WTC11 (cell line): ENCODE measurements at regions of chr15 and their contacts with region 1.

Region 1: GRCh38 chr15:43218908-43219706 is 1.7 kb downstream of the EPB42 start:
- DNase-seq: peak; percentile 80
- ATAC-seq: peak; percentile 96
- H3K4me3 Mint-ChIP-seq: no peak overlapping the region
- H3K27ac Mint-ChIP-seq: no peak overlapping the region
- H3K4me1 Mint-ChIP-seq: peaks cover 8% of the 10 kb centered on the region
- H3K27me3 Mint-ChIP-seq: no peaks in the 10 kb centered on the region; the same call in 1 of the 2 replicates
- CTCF ChIP-seq: peak; percentile 67

Region 2: GRCh38 chr15:43185157-43186017 is 33.7 kb before region 1 on chr15 and contains the start of gene CCNDBP1:
- CTCF ChIA-PET with region 1: interaction called, 10 read pairs
- POLR2A ChIA-PET with region 1: no interaction called
- DNase-seq: peak; percentile 99
- ATAC-seq: peak; percentile 96
- H3K4me3 Mint-ChIP-seq: peak within 1 kb of the TSS; percentile 96
- H3K27ac Mint-ChIP-seq: peak within 1 kb of the TSS; percentile 90
- H3K4me1 Mint-ChIP-seq: peaks cover 13% of the 10 kb centered on the region
- H3K27me3 Mint-ChIP-seq: no peaks in the 10 kb centered on the region
- CTCF ChIP-seq: no peak; the same call in 1 of the 2 replicates
- total RNA-seq, gene CCNDBP1: 19.1 to 22.0 TPM (median 20.4 TPM) in 3 replicates

Region 3: DNA sequence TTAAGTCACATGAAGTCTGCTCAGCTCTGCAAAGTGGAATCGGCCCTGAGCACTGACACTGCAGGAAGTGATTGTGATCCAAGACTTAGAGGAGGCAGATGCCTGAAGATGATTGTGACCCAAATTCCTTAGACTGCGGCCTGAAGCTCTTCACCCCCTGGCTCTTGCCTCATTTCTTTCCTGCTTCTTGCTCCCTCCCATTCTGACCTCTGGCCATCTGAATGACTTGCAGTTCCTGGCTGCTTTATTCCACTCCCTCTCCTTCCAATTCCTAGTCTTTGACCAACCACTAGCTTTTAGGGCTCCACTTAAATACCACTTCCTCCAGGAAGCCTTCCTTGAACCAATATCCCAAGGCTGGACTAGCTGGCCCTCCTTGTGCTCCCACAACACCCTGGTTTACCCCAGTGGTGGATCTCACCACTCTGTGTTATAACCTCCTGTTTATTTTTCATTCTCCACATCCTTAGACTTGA is 11.6 kb after region 1 on chr15:
- CTCF ChIA-PET with region 1: interaction called, 30 read pairs
- POLR2A ChIA-PET with region 1: no interaction called
- DNase-seq: no peak
- ATAC-seq: no peak
- H3K4me3 Mint-ChIP-seq: no peak overlapping the region
- H3K27ac Mint-ChIP-seq: no peak overlapping the region
- H3K4me1 Mint-ChIP-seq: no peaks in the 10 kb centered on the region
- H3K27me3 Mint-ChIP-seq: no peaks in the 10 kb centered on the region; the same call in 1 of the 2 replicates
- CTCF ChIP-seq: no peak

Region 4: GRCh38 chr15:43275740-43276562 is 56.8 kb after region 1 on chr15:
- CTCF ChIA-PET with region 1: interaction called, 11 read pairs
- POLR2A ChIA-PET with region 1: no interaction called
- DNase-seq: no peak
- ATAC-seq: no peak; the same call in 1 of the 2 replicates
- H3K4me3 Mint-ChIP-seq: no peak overlapping the region
- H3K27ac Mint-ChIP-seq: no peak overlapping the region
- H3K4me1 Mint-ChIP-seq: no peaks in the 10 kb centered on the region
- H3K27me3 Mint-ChIP-seq: no peaks in the 10 kb centered on the region
- CTCF ChIP-seq: no peak

Region 5: DNA sequence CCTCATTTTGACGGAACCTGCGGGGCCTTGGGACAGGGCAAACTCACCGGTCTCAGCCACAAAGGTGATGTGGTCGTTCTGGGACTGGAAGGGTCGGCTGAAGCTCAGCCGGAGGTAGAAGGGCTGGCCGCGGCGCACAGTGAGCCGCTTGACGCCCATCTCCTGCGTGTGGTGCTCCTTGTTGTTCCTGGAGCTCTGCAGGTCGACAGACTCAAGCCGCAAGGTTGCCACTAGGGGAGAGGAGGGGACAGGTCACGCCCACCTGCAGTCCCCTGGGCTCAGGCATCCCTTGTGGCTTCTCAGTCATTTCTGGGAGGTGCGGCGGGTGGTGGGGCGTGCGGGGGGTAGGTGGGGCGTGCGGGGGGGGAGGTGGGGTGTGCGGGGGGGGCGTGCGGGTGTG is 74.3 kb after region 1 on chr15:
- CTCF ChIA-PET with region 1: interaction called, 10 read pairs
- POLR2A ChIA-PET with region 1: no interaction called
- DNase-seq: peak; percentile 67
- ATAC-seq: peak; percentile 95
- H3K4me3 Mint-ChIP-seq: peak overlapping the region; percentile 61
- H3K27ac Mint-ChIP-seq: no peak overlapping the region
- H3K4me1 Mint-ChIP-seq: peaks cover 25% of the 10 kb centered on the region
- H3K27me3 Mint-ChIP-seq: peaks cover 8% of the 10 kb centered on the region
- CTCF ChIP-seq: no peak

Region 6: DNA sequence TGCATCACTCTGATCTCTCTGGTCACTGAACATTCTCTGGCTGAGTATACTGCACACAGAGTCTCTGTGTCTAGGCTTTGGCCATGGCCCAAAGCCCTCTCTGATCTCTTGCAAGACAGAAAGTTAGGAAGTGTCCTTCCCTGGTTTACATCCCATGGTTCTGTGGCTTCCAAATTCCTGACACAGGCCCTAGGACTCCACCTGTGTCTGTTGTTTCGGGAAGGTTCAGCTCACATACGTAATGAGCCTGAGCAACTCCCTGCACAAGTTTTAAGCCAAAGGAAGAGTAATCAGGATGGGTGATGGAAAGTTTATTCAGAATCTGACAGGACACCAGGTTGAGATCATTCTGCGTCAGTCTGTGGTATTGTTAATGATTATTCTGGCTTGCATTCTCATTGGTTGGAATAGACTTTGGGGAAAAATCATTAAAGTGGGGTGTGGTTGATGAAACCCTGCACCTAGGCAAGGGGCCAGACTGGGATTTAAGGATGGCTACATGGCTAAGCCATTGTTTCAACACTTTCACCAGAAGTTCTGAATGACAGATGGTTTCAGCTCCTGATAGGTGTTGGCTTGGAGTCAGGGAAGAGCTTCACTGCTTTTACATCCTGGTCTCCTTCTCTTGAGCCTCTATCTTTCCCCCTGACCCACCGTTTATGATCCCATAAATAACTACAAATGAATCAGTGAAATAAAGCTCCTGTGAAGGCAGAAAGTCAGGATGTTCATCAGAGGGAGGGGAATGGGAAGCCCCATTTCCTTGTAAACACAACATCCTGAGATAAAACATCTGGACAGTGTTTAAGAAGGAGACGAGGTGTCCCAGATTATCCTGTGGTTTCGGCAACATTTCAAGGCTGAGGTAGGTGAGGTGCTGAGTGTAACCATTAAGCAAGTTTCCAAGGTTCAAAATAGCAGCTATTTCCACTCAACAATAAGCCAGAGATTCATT is 97.2 kb after region 1 on chr15:
- CTCF ChIA-PET with region 1: no interaction called
- POLR2A ChIA-PET with region 1: no interaction called
- DNase-seq: no peak
- ATAC-seq: no peak
- H3K4me3 Mint-ChIP-seq: no peak overlapping the region
- H3K27ac Mint-ChIP-seq: no peak overlapping the region
- H3K4me1 Mint-ChIP-seq: 0 out of 2 replicates have a peak, but pooled peaks cover 6% of the 10 kb centered on the region
- H3K27me3 Mint-ChIP-seq: peaks cover 17% of the 10 kb centered on the region
- CTCF ChIP-seq: no peak